ENCODE measurements at regions of chr2 and their contacts with region 1.

Region 1: GRCh38 chr2:198127627-198128026 is 323.2 kb downstream of the PLCL1 start:
- DNase-seq: peak; percentile 32
- ATAC-seq: peak; percentile 94
- H3K4me3 ChIP-seq: no peak overlapping the region
- H3K27ac ChIP-seq: no peak overlapping the region
- H3K4me1 ChIP-seq: no peaks in the 10 kb centered on the region
- H3K27me3 ChIP-seq: no peaks in the 10 kb centered on the region; a peak in 1 of 4 replicates
- CTCF ChIP-seq: peak; percentile 56 to 88 (median 69)
- EP300 ChIP-seq: no peak
- POLR2A ChIP-seq: no peak
- RAD21 ChIP-seq: peak; percentile 95

Region 2: DNA sequence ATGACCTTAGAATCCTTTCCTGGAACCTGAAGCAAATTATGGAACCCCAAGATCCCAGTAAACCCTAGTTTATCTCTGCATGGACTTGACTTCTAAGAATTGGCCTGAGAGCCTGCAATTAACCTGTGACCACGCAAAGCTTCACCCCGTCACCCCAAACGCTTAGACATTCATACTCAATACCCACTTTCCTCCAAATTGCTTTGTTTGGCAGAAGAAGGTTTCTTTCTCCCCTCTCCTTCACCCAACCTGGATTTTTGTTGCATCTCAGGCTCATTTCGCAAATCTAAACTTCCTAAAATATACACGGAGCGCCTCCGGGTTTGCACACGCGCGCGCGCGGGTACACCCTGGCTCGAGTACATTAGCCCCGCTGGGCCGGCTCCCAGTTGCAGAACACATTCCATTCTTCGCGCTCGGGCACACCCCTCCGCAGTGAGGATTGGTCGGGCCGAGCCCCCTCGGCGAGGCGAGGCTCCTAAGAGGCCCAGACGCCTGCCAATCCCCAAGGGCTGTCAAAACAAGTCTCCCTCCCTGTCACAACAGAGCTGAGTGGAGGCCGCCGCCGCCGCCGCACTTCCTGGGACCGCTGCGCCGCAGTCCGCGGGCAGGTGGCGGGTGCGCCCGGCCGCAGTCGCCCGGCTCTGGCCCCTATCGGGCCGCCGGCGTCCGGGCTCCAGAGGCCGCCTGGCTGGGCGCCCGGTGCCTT is 323.4 kb before region 1 on chr2 and contains the start of gene PLCL1:
- CTCF ChIA-PET with region 1: interaction called, 109 read pairs
- POLR2A ChIA-PET with region 1: interaction called, 3 read pairs
- RAD21 ChIA-PET with region 1: interaction called, 35 read pairs
- SMC1A ChIA-PET with region 1: interaction called, 120 read pairs
- in situ Hi-C with region 1: loop called (anchors 5 kb)
- intact Hi-C with region 1: loop called (anchors 1 kb)
- DNase-seq: peak; percentile 40
- ATAC-seq: peak; percentile 99
- H3K4me3 ChIP-seq: peak within 1 kb of the TSS; percentile 62
- H3K27ac ChIP-seq: no peak within 1 kb of the TSS
- H3K4me1 ChIP-seq: no peaks in the 10 kb centered on the region
- H3K27me3 ChIP-seq: peaks cover 4 to 19% of the 10 kb centered on the region in 2 experiments
- CTCF ChIP-seq: 0 out of 6 replicates have a peak, but pooled peaks of 1 of the 3 experiments have one; percentile 2
- EP300 ChIP-seq: no peak
- POLR2A ChIP-seq: no peak
- RAD21 ChIP-seq: no peak
- polyA plus RNA-seq, gene PLCL1: 0.03 to 0.05 TPM

Region 3: GRCh38 chr2:197889041-197889440 is 238.6 kb before region 1 on chr2:
- CTCF ChIA-PET with region 1: interaction called, 13 read pairs
- POLR2A ChIA-PET with region 1: interaction called, 3 read pairs
- RAD21 ChIA-PET with region 1: interaction called, 14 read pairs
- SMC1A ChIA-PET with region 1: interaction called, 9 read pairs
- in situ Hi-C with region 1: no loop called
- intact Hi-C with region 1: no loop called
- DNase-seq: peak; percentile 77
- ATAC-seq: peak; percentile 98
- H3K4me3 ChIP-seq: no peak overlapping the region
- H3K27ac ChIP-seq: peak overlapping the region; percentile 27; the same call in 1 of the 2 replicates
- H3K4me1 ChIP-seq: peaks cover 4% of the 10 kb centered on the region
- H3K27me3 ChIP-seq: no peaks in the 10 kb centered on the region
- CTCF ChIP-seq: no peak
- EP300 ChIP-seq: peak; percentile 37 to 83; a peak in 2 of 4 replicates
- POLR2A ChIP-seq: no peak
- RAD21 ChIP-seq: no peak

Region 4: DNA sequence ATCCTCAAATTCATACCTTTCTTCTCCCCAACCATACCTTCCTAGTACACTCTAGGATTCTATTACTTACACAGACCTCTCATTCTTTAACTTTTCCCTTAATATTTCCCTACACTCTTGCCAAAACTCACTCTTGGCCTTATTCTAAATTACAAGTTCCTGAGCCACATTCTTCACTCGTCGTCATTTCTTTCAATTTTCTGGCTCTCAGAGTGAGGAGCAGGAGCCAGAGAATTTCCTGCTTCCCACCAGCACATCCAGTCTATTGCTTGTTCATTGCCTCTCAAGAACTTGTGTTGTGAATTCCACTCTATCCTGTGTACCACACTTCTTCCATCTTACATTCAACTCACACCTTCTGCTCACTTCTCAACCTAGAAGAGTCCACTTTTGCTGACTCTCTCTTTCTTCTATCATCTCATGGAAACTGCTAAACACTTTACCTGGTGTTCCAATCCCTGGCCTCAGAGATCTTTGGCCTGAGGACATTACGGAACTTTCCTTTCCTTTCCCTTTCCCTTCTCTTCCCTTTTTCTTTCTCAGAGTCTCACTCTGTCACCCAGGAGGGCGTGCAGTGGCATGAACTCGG is 151.6 kb before region 1 on chr2:
- CTCF ChIA-PET with region 1: no interaction called
- POLR2A ChIA-PET with region 1: no interaction called
- RAD21 ChIA-PET with region 1: no interaction called
- SMC1A ChIA-PET with region 1: no interaction called
- in situ Hi-C with region 1: no loop called
- intact Hi-C with region 1: no loop called
- DNase-seq: no peak
- ATAC-seq: no peak
- H3K4me3 ChIP-seq: no peak overlapping the region
- H3K27ac ChIP-seq: no peak overlapping the region
- H3K4me1 ChIP-seq: no peaks in the 10 kb centered on the region
- H3K27me3 ChIP-seq: no peaks in the 10 kb centered on the region
- CTCF ChIP-seq: no peak
- EP300 ChIP-seq: no peak
- POLR2A ChIP-seq: no peak
- RAD21 ChIP-seq: no peak

Region 5: DNA sequence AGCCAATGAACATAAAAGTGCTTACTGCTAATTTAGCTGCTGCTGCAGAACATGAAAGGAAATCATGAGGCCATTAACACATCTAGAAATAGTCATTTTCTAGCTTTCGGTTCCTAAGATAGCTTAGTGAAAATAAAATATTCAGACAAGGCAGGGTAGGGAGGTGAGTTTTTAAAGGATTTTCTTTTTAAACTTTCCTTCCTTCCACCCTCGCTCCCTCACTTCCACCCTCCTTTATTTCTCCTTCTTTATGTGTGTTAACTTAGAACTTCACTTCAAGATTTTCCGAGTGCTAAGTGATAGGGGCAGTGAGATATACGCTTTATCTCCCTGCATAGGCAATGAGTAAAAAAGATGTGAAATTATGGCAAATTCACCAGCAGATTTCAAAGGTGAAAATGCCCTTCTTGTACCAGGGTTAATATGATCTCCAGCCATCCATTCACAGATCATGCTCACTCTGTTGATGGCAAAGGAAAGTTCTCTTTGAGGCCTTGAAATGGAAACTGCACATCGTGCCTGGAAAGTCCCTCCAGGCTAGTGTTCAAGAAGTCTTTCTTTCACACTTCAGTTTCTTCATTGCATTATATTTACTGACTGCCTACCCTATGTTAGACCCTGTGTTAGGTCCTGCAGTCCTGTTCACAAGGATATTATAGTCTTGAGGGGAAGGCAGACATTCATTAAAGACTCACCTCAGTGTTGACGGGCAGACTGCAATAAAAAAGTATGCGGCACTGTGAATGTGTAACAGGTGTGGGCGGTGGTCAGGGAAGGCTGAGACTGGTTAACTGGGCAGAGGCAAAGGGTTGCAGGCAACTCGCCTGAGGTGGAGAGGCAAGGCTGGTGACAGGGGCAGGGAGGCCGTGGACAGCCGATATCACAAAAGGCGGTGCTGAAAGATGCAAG is 122.5 kb before region 1 on chr2:
- CTCF ChIA-PET with region 1: interaction called, 5 read pairs
- POLR2A ChIA-PET with region 1: no interaction called
- RAD21 ChIA-PET with region 1: interaction called, 30 read pairs
- SMC1A ChIA-PET with region 1: interaction called, 16 read pairs
- in situ Hi-C with region 1: no loop called
- intact Hi-C with region 1: no loop called
- DNase-seq: peak; percentile 87
- ATAC-seq: peak; percentile 86
- H3K4me3 ChIP-seq: peak overlapping the region; percentile 20; the same call in 1 of the 2 replicates
- H3K27ac ChIP-seq: peak overlapping the region; percentile 99
- H3K4me1 ChIP-seq: peaks cover 39% of the 10 kb centered on the region
- H3K27me3 ChIP-seq: no peaks in the 10 kb centered on the region
- CTCF ChIP-seq: no peak
- EP300 ChIP-seq: peak; percentile 72 to 89
- POLR2A ChIP-seq: no peak
- RAD21 ChIP-seq: peak; percentile 13; the same call in 1 of the 2 replicates

Region 6: DNA sequence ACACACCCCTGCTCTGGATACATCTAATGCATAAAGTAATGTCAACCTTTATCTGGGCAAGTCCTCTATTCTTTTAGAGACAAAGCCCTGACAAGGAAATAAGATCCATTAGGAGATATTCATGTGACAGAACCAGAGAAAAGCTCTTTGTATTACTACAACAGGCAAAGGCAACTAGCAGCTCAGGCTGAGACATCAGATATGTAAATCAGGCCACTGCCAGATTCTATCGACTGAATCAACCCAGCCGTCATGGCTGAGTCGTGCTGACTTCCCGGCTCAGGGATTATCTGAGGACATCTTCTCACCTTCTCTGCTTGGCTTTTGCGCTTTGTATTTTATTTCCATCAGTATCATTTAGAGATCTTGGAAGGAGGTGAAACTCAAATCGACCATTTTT is 28.7 kb before region 1 on chr2:
- CTCF ChIA-PET with region 1: interaction called, 8 read pairs
- POLR2A ChIA-PET with region 1: no interaction called
- RAD21 ChIA-PET with region 1: interaction called, 13 read pairs
- SMC1A ChIA-PET with region 1: interaction called, 21 read pairs
- in situ Hi-C with region 1: no loop called
- intact Hi-C with region 1: no loop called
- DNase-seq: no peak
- ATAC-seq: no peak
- H3K4me3 ChIP-seq: no peak overlapping the region
- H3K27ac ChIP-seq: no peak overlapping the region
- H3K4me1 ChIP-seq: peaks cover 2% of the 10 kb centered on the region; the same call in 1 of the 2 replicates
- H3K27me3 ChIP-seq: no peaks in the 10 kb centered on the region
- CTCF ChIP-seq: no peak
- EP300 ChIP-seq: no peak
- POLR2A ChIP-seq: no peak
- RAD21 ChIP-seq: no peak

Region 7: GRCh38 chr2:198214114-198214596 is 86.5 kb after region 1 on chr2:
- CTCF ChIA-PET with region 1: no interaction called
- POLR2A ChIA-PET with region 1: no interaction called
- RAD21 ChIA-PET with region 1: no interaction called
- SMC1A ChIA-PET with region 1: no interaction called
- in situ Hi-C with region 1: no loop called
- intact Hi-C with region 1: no loop called
- DNase-seq: no peak
- ATAC-seq: no peak
- H3K4me3 ChIP-seq: no peak overlapping the region
- H3K27ac ChIP-seq: no peak overlapping the region
- H3K4me1 ChIP-seq: no peaks in the 10 kb centered on the region
- H3K27me3 ChIP-seq: no peaks in the 10 kb centered on the region
- CTCF ChIP-seq: no peak
- EP300 ChIP-seq: no peak
- POLR2A ChIP-seq: no peak
- RAD21 ChIP-seq: no peak

Region 8: GRCh38 chr2:198296665-198297308 is 169.2 kb after region 1 on chr2:
- CTCF ChIA-PET with region 1: interaction called, 46 read pairs
- POLR2A ChIA-PET with region 1: no interaction called
- RAD21 ChIA-PET with region 1: interaction called, 20 read pairs
- SMC1A ChIA-PET with region 1: interaction called, 19 read pairs
- in situ Hi-C with region 1: no loop called
- intact Hi-C with region 1: loop called (anchors 5 kb)
- DNase-seq: no peak
- ATAC-seq: peak; percentile 96
- H3K4me3 ChIP-seq: no peak overlapping the region
- H3K27ac ChIP-seq: no peak overlapping the region
- H3K4me1 ChIP-seq: no peaks in the 10 kb centered on the region
- H3K27me3 ChIP-seq: peaks cover 0 to 2% of the 10 kb centered on the region in 2 experiments; a peak in 3 of 4 replicates
- CTCF ChIP-seq: peak; percentile 58 to 77 (median 65)
- EP300 ChIP-seq: no peak
- POLR2A ChIP-seq: no peak
- RAD21 ChIP-seq: peak; percentile 84

Measured in GM12878 (cell line).